ENCODE measurements at regions of chr5 and their contacts with region 1.

Region 1: GRCh38 chr5:154189819-154190594 is 526 bp upstream of the GALNT10 start:
- DNase-seq: no peak
- ATAC-seq: peak; percentile 84
- H3K4me3 ChIP-seq: peak overlapping the region; percentile 82
- H3K27ac ChIP-seq: peak overlapping the region; percentile 65
- H3K4me1 ChIP-seq: peaks cover 8% of the 10 kb centered on the region
- H3K27me3 ChIP-seq: peaks cover 0 to 4% of the 10 kb centered on the region in 2 experiments; a peak in 1 of 4 replicates
- CTCF ChIP-seq: peak; percentile 26 to 44 (median 43); a peak in 5 of 6 replicates
- EP300 ChIP-seq: no peak
- POLR2A ChIP-seq: 0 out of 2 replicates have a peak, but pooled peaks have one; percentile 45
- RAD21 ChIP-seq: no peak

Region 2: GRCh38 chr5:154202379-154203260 is 12.6 kb after region 1 on chr5:
- CTCF ChIA-PET with region 1: interaction called, 23 read pairs
- POLR2A ChIA-PET with region 1: interaction called, 51 read pairs
- RAD21 ChIA-PET with region 1: interaction called, 24 read pairs
- SMC1A ChIA-PET with region 1: interaction called, 28 read pairs
- in situ Hi-C with region 1: no loop called
- intact Hi-C with region 1: no loop called
- DNase-seq: no peak
- ATAC-seq: peak; percentile 91
- H3K4me3 ChIP-seq: peak overlapping the region; percentile 66
- H3K27ac ChIP-seq: peak overlapping the region; percentile 86
- H3K4me1 ChIP-seq: peaks cover 39% of the 10 kb centered on the region
- H3K27me3 ChIP-seq: no peaks in the 10 kb centered on the region
- CTCF ChIP-seq: no peak
- EP300 ChIP-seq: no peak
- POLR2A ChIP-seq: peak; percentile 57
- RAD21 ChIP-seq: no peak

Region 3: DNA sequence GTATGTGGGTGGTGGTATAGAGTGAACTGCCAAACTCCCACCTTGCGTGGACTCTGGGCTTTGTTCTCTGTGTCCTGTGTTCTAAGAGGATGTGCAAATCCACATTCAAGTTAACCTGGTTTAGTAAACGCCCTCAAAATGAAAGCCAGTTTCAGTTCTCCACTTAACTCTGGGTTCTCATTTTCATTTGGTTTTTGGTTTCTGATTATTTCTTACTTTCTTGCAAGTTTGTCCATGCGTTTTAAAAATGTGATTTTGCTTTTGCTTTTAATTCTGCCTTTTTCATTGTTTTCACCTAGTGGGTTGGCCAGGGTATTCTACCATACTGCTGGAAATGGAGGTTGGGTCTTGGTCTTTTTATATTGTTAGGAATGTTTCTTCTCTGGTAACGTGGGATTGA is 38.7 kb after region 1 on chr5:
- CTCF ChIA-PET with region 1: interaction called, 3 read pairs
- POLR2A ChIA-PET with region 1: interaction called, 6 read pairs
- RAD21 ChIA-PET with region 1: interaction called, 6 read pairs
- SMC1A ChIA-PET with region 1: interaction called, 13 read pairs
- in situ Hi-C with region 1: no loop called
- intact Hi-C with region 1: loop called (anchors 5 kb)
- DNase-seq: peak; percentile 72
- ATAC-seq: peak; percentile 98
- H3K4me3 ChIP-seq: peak overlapping the region; percentile 50; the same call in 1 of the 2 replicates
- H3K27ac ChIP-seq: peak overlapping the region; percentile 75
- H3K4me1 ChIP-seq: peaks cover 23% of the 10 kb centered on the region
- H3K27me3 ChIP-seq: no peaks in the 10 kb centered on the region
- CTCF ChIP-seq: no peak
- EP300 ChIP-seq: peak; percentile 22 to 62; a peak in 2 of 4 replicates
- POLR2A ChIP-seq: no peak
- RAD21 ChIP-seq: no peak

Region 4: DNA sequence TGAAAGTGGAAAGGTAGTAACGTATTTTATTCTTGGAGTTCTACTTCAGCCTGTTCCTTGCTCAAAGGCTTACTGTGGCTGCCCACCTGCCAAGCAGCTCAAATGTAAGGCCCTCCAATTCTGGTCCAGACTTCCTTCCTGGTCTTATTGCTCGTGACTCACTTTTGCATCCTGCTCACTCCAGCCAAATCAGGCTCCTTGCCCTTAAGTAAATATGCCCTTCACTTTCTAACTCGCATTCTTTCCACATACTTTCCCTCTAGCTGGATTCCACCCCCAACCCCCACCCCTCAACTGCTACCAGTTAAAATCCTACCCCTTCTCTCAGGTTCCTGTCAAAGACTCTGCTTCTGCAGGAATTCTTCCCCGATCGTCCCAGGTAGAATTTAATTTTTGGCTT is 97.1 kb after region 1 on chr5:
- CTCF ChIA-PET with region 1: no interaction called
- POLR2A ChIA-PET with region 1: interaction called, 4 read pairs
- RAD21 ChIA-PET with region 1: interaction called, 4 read pairs
- SMC1A ChIA-PET with region 1: interaction called, 6 read pairs
- in situ Hi-C with region 1: no loop called
- intact Hi-C with region 1: loop called (anchors 5 kb)
- DNase-seq: no peak
- ATAC-seq: no peak
- H3K4me3 ChIP-seq: no peak overlapping the region
- H3K27ac ChIP-seq: no peak overlapping the region
- H3K4me1 ChIP-seq: peaks cover 32% of the 10 kb centered on the region
- H3K27me3 ChIP-seq: no peaks in the 10 kb centered on the region
- CTCF ChIP-seq: no peak
- EP300 ChIP-seq: no peak
- POLR2A ChIP-seq: no peak
- RAD21 ChIP-seq: no peak